ENCODE measurements at regions of chr7 and their contacts with region 1.

Region 1: DNA sequence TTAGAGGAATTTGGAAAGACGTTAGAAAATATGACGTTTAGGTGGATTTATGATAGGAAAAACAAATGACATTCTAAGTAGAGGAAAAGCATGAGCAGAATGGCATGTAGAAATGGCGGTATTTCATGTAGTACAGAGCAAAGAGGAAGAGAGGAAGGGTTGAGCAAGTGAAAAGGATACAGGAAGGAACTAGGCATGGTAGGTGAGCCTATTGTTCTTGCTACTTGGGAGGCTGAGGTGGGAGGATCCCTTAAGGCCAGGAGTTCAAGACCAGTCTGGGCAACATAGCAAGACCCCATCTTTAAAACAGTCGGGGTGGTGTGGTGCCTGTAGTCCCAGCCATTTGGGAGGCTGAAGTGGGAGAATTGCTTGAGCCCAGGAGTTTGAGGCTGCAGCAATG is 1.2 kb downstream of the GTPBP10 start:
- DNase-seq: no peak
- ATAC-seq: no peak
- H3K4me3 Mint-ChIP-seq: peak overlapping the region; percentile 94 to 99 (median 96)
- H3K27ac Mint-ChIP-seq: peak overlapping the region; percentile 81 to 100 (median 100)
- H3K4me1 Mint-ChIP-seq: peaks cover 28 to 69% (median 62%) of the 10 kb centered on the region in 4 donors
- H3K27me3 Mint-ChIP-seq: no peaks in the 10 kb centered on the region

Region 2: GRCh38 chr7:90459888-90460287 is 112.1 kb after region 1 on chr7:
- POLR2A ChIA-PET with region 1: interaction called, 10 read pairs
- DNase-seq: no peak
- ATAC-seq: no peak
- H3K4me3 Mint-ChIP-seq: no peak overlapping the region
- H3K27ac Mint-ChIP-seq: no peak overlapping the region
- H3K4me1 Mint-ChIP-seq: peaks cover 14 to 18% (median 17%) of the 10 kb centered on the region in 4 donors
- H3K27me3 Mint-ChIP-seq: peaks cover 6 to 13% (median 10%) of the 10 kb centered on the region in 5 donors

Region 3: GRCh38 chr7:90766814-90767564 is 419.2 kb after region 1 on chr7:
- POLR2A ChIA-PET with region 1: no interaction called
- DNase-seq: no peak
- ATAC-seq: no peak
- H3K4me3 Mint-ChIP-seq: no peak overlapping the region
- H3K27ac Mint-ChIP-seq: no peak overlapping the region
- H3K4me1 Mint-ChIP-seq: peaks cover 0 to 3% (median 0%) of the 10 kb centered on the region in 4 donors
- H3K27me3 Mint-ChIP-seq: no peaks in the 10 kb centered on the region